Calu3 (cell line): ENCODE measurements at regions of chr1 and their contacts with region 1.

Region 1: GRCh38 chr1:198088360-198089071 is 68.3 kb upstream of the NEK7 start:
- DNase-seq: peak; percentile 47
- H3K4me3 Mint-ChIP-seq: peak overlapping the region; percentile 63
- H3K27ac Mint-ChIP-seq: peak overlapping the region; percentile 87
- H3K4me1 Mint-ChIP-seq: peaks cover 49% of the 10 kb centered on the region
- H3K27me3 Mint-ChIP-seq: no peaks in the 10 kb centered on the region
- CTCF ChIP-seq: peak; percentile 68

Region 2: GRCh38 chr1:197924516-197925123 is 163.9 kb before region 1 on chr1:
- CTCF ChIA-PET with region 1: no interaction called
- intact Hi-C with region 1: loop called (anchors 10 kb)
- DNase-seq: peak; percentile 60
- H3K4me3 Mint-ChIP-seq: no peak overlapping the region
- H3K27ac Mint-ChIP-seq: no peak overlapping the region
- H3K4me1 Mint-ChIP-seq: peaks cover 49% of the 10 kb centered on the region
- H3K27me3 Mint-ChIP-seq: no peaks in the 10 kb centered on the region
- CTCF ChIP-seq: peak; percentile 51

Region 3: GRCh38 chr1:198107041-198107440 is 18.5 kb after region 1 on chr1:
- CTCF ChIA-PET with region 1: no interaction called
- intact Hi-C with region 1: no loop called
- DNase-seq: peak; percentile 32
- H3K4me3 Mint-ChIP-seq: no peak overlapping the region
- H3K27ac Mint-ChIP-seq: peak overlapping the region; percentile 70
- H3K4me1 Mint-ChIP-seq: peaks cover 41% of the 10 kb centered on the region
- H3K27me3 Mint-ChIP-seq: no peaks in the 10 kb centered on the region
- CTCF ChIP-seq: no peak

Region 4: GRCh38 chr1:198121058-198121829 is 32.7 kb after region 1 on chr1:
- CTCF ChIA-PET with region 1: interaction called, 3 read pairs
- intact Hi-C with region 1: loop called (anchors 2 kb)
- DNase-seq: peak; percentile 76
- H3K4me3 Mint-ChIP-seq: no peak overlapping the region
- H3K27ac Mint-ChIP-seq: no peak overlapping the region
- H3K4me1 Mint-ChIP-seq: peaks cover 24% of the 10 kb centered on the region
- H3K27me3 Mint-ChIP-seq: no peaks in the 10 kb centered on the region
- CTCF ChIP-seq: no peak

Region 5: DNA sequence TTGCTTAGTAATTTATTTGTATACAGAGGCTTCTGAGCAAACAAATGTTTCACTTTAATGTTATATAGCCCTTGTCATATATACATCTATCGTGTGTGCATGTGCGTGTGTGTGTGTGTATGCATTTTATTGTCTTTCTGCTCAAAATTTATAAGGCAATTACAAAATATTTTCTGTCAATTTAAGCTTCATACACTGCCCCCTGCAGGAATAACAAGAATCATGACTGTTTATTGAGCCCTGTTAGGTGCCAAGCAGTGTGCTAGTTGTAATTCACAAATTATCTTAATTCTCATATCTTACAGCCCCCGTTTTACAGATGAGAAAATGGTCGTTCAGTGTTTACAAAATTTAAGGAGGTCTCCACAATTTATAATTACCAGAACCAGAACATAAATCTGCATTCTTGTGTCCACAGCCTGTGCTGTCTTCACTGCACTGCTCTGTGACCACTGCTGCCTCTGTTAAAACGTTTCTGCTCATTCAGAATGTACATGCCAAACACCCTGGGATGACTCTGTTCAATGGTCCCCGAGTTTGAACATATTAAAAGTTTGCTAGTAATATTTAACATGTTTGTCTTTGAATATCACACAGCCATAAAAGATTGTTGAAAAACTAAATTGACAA is 270.6 kb after region 1 on chr1:
- CTCF ChIA-PET with region 1: no interaction called
- intact Hi-C with region 1: loop called (anchors 10 kb)
- DNase-seq: no peak
- H3K4me3 Mint-ChIP-seq: no peak overlapping the region
- H3K27ac Mint-ChIP-seq: no peak overlapping the region
- H3K4me1 Mint-ChIP-seq: no peaks in the 10 kb centered on the region
- H3K27me3 Mint-ChIP-seq: no peaks in the 10 kb centered on the region
- CTCF ChIP-seq: no peak

Region 6: GRCh38 chr1:199226163-199226562 is 1137.6 kb after region 1 on chr1:
- CTCF ChIA-PET with region 1: no interaction called
- intact Hi-C with region 1: loop called (anchors 10 kb)
- DNase-seq: no peak
- H3K4me3 Mint-ChIP-seq: no peak overlapping the region
- H3K27ac Mint-ChIP-seq: peak overlapping the region; percentile 17
- H3K4me1 Mint-ChIP-seq: peaks cover 11% of the 10 kb centered on the region
- H3K27me3 Mint-ChIP-seq: no peaks in the 10 kb centered on the region
- CTCF ChIP-seq: no peak